Activated CD4-positive, alpha-beta memory T cell treated with anti-CD3 and anti-CD28 coated beads for 36 hours (primary cell): ENCODE measurements at regions of chr11 and their contacts with region 1.

Region 1: DNA sequence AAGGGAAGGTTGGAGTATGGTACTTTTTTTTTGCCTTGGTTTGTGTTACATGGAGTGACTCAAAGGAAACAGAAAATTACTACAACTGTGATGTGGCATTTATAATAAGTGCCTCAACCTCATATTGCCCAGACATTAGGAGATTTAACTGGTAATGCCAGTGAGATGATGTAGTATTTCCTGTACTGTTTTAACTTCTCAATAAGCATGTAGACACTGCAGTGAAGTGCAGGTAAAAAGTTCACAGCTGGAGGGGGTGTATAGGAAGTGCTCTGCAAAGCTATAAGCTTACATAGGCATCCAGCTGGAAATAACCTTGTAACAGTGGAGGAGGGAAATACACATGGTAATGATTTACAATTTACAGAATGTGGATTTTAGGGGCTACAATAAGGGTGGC is 138.2 kb upstream of the MTMR2 start:
- DNase-seq: peak; percentile 54
- H3K4me3 Mint-ChIP-seq: peak overlapping the region; percentile 31
- H3K27ac Mint-ChIP-seq: peak overlapping the region; percentile 88
- H3K4me1 Mint-ChIP-seq: peaks cover 75% of the 10 kb centered on the region
- H3K27me3 Mint-ChIP-seq: no peaks in the 10 kb centered on the region

Region 2: DNA sequence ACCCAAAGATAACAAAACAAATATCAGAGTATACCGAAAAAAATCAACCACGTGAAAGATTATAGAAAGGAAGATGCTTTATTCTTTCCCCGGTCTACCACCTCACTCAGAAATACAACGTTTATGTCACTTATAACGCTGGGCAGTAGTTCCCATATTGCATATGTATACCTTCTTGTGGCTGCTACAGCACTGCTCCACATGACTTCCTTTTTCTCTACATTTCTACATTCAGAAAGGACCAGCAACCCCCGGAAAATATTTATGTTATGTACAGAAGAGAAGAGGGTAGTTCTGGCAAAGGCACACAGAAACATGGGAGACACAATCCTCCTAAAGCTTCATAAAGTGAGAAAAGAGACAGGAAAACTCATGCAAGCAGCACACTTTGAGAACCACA is 195.0 kb before region 1 on chr11:
- CTCF ChIA-PET with region 1: no interaction called
- POLR2A ChIA-PET with region 1: no interaction called
- intact Hi-C with region 1: no loop called
- DNase-seq: no peak
- H3K4me3 Mint-ChIP-seq: no peak overlapping the region
- H3K27ac Mint-ChIP-seq: no peak overlapping the region
- H3K4me1 Mint-ChIP-seq: no peaks in the 10 kb centered on the region
- H3K27me3 Mint-ChIP-seq: no peaks in the 10 kb centered on the region

Region 3: DNA sequence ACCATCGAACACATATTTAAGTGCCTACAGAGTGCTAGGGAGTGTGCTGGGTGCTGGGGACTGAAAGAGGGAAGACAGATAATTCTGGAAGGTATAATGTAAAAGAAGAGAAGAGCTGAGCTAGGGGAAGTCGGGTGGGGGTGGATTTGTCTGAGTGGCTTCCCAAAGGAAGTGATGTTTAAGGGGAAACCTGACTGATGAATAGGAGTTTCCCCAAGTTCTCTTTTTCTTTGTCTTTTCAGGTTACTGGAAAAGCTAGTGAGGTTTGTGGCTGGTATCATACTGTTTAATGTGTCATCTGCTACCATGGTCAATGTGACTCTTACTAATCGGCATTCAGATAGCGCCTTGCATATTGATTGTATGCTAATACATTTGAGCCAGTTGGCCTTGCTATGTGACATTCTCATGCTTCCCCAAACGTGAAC is 13.4 kb after region 1 on chr11:
- CTCF ChIA-PET with region 1: interaction called, 17 read pairs
- POLR2A ChIA-PET with region 1: interaction called, 28 read pairs
- intact Hi-C with region 1: loop called (anchors 1 kb)
- DNase-seq: peak; percentile 53
- H3K4me3 Mint-ChIP-seq: peak overlapping the region; percentile 44
- H3K27ac Mint-ChIP-seq: peak overlapping the region; percentile 85
- H3K4me1 Mint-ChIP-seq: peaks cover 80% of the 10 kb centered on the region
- H3K27me3 Mint-ChIP-seq: no peaks in the 10 kb centered on the region

Region 4: GRCh38 chr11:96155627-96156378 is 93.7 kb after region 1 on chr11:
- CTCF ChIA-PET with region 1: no interaction called
- POLR2A ChIA-PET with region 1: no interaction called
- intact Hi-C with region 1: loop called (anchors 1 kb)
- DNase-seq: peak; percentile 88
- H3K4me3 Mint-ChIP-seq: peak overlapping the region; percentile 42
- H3K27ac Mint-ChIP-seq: peak overlapping the region; percentile 95
- H3K4me1 Mint-ChIP-seq: peaks cover 61% of the 10 kb centered on the region
- H3K27me3 Mint-ChIP-seq: no peaks in the 10 kb centered on the region

Region 5: GRCh38 chr11:96197801-96198701 is 135.9 kb after region 1 on chr11:
- CTCF ChIA-PET with region 1: no interaction called
- POLR2A ChIA-PET with region 1: interaction called, 7 read pairs
- intact Hi-C with region 1: loop called (anchors 1 kb)
- DNase-seq: peak; percentile 50
- H3K4me3 Mint-ChIP-seq: peak overlapping the region; percentile 28
- H3K27ac Mint-ChIP-seq: peak overlapping the region; percentile 94
- H3K4me1 Mint-ChIP-seq: peaks cover 86% of the 10 kb centered on the region
- H3K27me3 Mint-ChIP-seq: no peaks in the 10 kb centered on the region

Region 6: DNA sequence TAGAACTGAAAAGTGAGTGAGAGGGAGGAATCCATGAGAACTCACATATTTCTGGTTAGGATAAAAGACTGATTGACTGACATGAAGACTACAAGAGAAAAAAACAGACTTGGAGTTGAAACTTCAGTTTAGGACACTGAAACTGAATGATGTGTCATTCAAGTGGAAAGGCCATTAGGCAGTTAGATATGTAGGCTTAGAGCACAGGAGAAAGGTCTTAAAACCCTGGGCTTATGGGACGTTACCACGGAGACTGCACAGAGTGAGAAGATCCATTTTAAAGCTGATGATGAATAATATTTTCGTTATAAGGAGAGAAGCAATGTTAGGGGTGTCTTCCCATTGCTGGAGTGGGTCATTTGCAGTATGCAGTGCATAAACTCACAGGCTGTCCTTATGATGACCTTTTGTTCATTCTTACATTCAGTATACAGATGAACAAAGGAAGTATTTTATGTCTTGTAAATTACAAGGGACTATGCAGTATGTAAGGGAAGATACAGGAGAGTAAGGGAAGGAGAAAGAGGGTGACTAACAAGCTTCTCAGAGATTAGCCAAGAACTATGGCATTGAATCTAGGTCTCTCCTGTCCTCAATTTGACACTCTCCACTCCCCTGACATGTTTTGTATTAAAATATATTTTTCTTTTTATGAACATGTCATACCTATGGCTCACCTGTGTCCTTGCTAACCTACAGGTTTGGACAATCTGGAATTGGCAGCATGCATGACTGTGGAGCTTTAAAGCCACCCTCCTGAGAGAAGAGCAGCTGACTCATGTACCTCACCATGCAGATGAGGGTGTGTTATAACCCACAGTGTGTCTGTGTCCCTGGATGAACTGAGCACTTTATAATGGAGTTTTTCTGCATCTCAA is 217.1 kb after region 1 on chr11:
- CTCF ChIA-PET with region 1: no interaction called
- POLR2A ChIA-PET with region 1: no interaction called
- intact Hi-C with region 1: no loop called
- DNase-seq: no peak
- H3K4me3 Mint-ChIP-seq: no peak overlapping the region
- H3K27ac Mint-ChIP-seq: no peak overlapping the region
- H3K4me1 Mint-ChIP-seq: peaks cover 56% of the 10 kb centered on the region
- H3K27me3 Mint-ChIP-seq: no peaks in the 10 kb centered on the region